Activated CD4-positive, alpha-beta T cell treated with anti-CD3 and anti-CD28 coated beads for 36 hours (primary cell): ENCODE measurements at regions of chr7 and their contacts with region 1.

Region 1: GRCh38 chr7:35753761-35754603 is 46.9 kb upstream of the SEPTIN7 start:
- DNase-seq: no peak
- ATAC-seq: no peak
- H3K4me3 Mint-ChIP-seq: no peak overlapping the region
- H3K27ac Mint-ChIP-seq: no peak overlapping the region
- H3K4me1 Mint-ChIP-seq: peaks cover 3% of the 10 kb centered on the region
- H3K27me3 Mint-ChIP-seq: no peaks in the 10 kb centered on the region

Region 2: GRCh38 chr7:35584990-35585389 is 169.0 kb before region 1 on chr7:
- CTCF ChIA-PET with region 1: no interaction called
- POLR2A ChIA-PET with region 1: no interaction called
- intact Hi-C with region 1: no loop called
- DNase-seq: no peak
- ATAC-seq: no peak
- H3K4me3 Mint-ChIP-seq: no peak overlapping the region
- H3K27ac Mint-ChIP-seq: no peak overlapping the region
- H3K4me1 Mint-ChIP-seq: no peaks in the 10 kb centered on the region
- H3K27me3 Mint-ChIP-seq: peaks cover 2% of the 10 kb centered on the region

Region 3: GRCh38 chr7:35658602-35659201 is 95.3 kb before region 1 on chr7:
- CTCF ChIA-PET with region 1: no interaction called
- POLR2A ChIA-PET with region 1: interaction called, 12 read pairs
- intact Hi-C with region 1: no loop called
- DNase-seq: no peak
- ATAC-seq: peak; percentile 47
- H3K4me3 Mint-ChIP-seq: no peak overlapping the region
- H3K27ac Mint-ChIP-seq: no peak overlapping the region
- H3K4me1 Mint-ChIP-seq: peaks cover 41% of the 10 kb centered on the region
- H3K27me3 Mint-ChIP-seq: no peaks in the 10 kb centered on the region

Region 4: DNA sequence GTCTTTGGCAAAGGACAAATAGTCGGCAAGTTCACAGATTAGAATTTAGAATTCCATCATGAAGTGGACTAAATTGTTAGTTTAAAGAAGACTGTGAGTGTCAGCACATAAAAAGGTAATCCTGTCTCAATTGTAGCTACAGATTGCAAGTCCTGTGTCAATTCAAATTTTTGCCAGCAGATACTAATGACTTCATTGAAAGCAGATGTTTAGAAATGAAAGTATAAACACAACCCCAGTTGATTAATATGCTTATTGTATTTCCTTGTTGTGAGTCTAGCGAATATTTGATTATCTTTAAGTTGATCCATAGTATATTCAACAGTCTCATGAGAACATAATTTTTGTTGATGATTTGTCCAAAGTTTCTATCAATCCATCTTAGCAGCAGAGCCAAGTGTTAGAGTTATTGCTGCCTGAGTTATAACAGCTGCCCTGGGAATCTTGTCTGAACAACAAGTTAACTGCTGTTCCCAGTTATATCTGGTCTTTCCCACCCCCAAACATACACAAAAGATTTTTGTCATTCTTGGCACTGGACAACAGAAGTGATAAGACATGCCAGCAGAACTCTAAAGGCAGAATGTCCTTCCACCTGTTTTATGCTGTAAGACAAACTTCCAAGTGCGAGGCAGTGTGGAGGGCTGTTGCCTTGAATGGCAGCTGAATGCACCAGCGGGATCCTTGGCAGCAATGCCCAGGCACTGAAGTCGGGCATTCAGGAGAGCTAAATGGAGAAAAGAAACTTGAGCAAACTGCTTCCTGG is 37.8 kb before region 1 on chr7:
- CTCF ChIA-PET with region 1: no interaction called
- POLR2A ChIA-PET with region 1: no interaction called
- intact Hi-C with region 1: no loop called
- DNase-seq: no peak
- ATAC-seq: no peak
- H3K4me3 Mint-ChIP-seq: no peak overlapping the region
- H3K27ac Mint-ChIP-seq: no peak overlapping the region
- H3K4me1 Mint-ChIP-seq: no peaks in the 10 kb centered on the region
- H3K27me3 Mint-ChIP-seq: no peaks in the 10 kb centered on the region